ENCODE measurements at regions of chr4 and their contacts with region 1.

Region 1: DNA sequence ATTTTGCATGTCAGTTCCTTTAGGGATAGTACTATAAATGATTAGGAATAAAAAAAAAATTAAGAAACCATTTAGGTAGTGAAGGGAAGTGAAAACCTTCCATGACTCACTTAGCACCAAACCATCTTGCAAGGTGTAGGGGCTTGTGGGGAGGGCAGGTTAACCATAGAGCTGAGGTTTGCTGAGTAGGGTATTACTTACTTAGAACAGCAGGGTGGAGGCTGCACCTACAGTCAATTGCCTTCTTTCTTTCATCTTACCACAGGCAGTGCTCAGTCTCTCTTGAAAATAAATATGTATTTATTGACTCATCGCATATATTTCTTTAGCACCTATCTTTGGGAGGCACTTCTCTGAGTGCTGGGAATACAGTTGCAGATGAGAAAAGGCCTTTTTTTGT is 104.9 kb upstream of the GIMD1 start:
- DNase-seq: no peak
- ATAC-seq: no peak
- H3K4me3 ChIP-seq: no peak overlapping the region
- H3K27ac ChIP-seq: no peak overlapping the region
- H3K4me1 ChIP-seq: no peaks in the 10 kb centered on the region
- H3K27me3 ChIP-seq: peaks cover 0 to 9% (median 0%) of the 10 kb centered on the region in 7 donors
- CTCF ChIP-seq: no peak

Region 2: GRCh38 chr4:106358899-106359298 is 114.6 kb before region 1 on chr4:
- intact Hi-C with region 1: no loop called
- DNase-seq: no peak
- ATAC-seq: no peak
- H3K4me3 ChIP-seq: no peak overlapping the region
- H3K27ac ChIP-seq: no peak overlapping the region
- H3K4me1 ChIP-seq: peaks cover 0 to 9% (median 0%) of the 10 kb centered on the region in 9 donors
- H3K27me3 ChIP-seq: no peaks in the 10 kb centered on the region
- CTCF ChIP-seq: no peak

Region 3: GRCh38 chr4:107736924-107737448 is 1263.5 kb after region 1 on chr4:
- intact Hi-C with region 1: loop called in 1 of 10 experiments (anchors 5 kb)
- DNase-seq: peak in 1 of 2 donors; percentile 38
- ATAC-seq: peak in 6 of 8 donors; percentile 37 to 63 (median 52)
- H3K4me3 ChIP-seq: no peak overlapping the region
- H3K27ac ChIP-seq: no peak overlapping the region
- H3K4me1 ChIP-seq: peaks cover 0 to 41% (median 10%) of the 10 kb centered on the region in 9 donors
- H3K27me3 ChIP-seq: no peaks in the 10 kb centered on the region
- CTCF ChIP-seq: peak; percentile 51 to 88 (median 78)

Measured in heart right ventricle (tissue), 16 donors.